ENCODE measurements at regions of chr12 and their contacts with region 1.

Region 1: DNA sequence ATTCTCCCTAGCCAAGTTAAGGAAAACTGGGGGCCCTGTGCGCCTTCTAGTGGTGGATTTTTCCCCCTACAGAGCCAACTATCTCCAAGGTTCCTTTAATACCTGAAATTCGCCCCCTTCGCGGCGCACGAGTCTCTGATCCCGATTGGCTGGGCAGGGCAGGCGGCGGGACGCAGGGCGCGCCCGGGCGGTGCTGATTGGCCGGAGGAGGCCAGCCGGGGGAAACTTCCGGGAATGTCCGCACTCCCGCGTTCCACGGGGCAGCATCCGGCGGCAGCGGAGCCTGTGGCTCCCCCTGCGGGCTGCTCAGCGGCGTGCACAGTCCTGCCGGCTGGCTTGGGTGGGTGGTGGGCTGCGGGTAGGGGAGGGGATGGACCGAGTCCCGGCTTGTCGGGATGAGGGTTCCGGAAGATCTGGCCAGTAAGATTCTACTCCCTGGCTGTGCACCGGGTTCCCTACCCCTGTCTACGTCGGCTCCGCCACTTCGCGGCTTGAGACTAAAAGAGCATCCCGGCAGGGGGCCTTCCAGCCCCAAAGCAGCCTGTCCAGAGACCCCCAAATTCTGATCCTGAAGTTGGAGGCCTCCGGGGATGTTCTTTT is at the start of gene NABP2:
- DNase-seq: peak; percentile 97
- H3K4me3 Mint-ChIP-seq: peak within 1 kb of the TSS; percentile 96
- H3K27ac Mint-ChIP-seq: peak within 1 kb of the TSS; percentile 80
- H3K4me1 Mint-ChIP-seq: peaks cover 33% of the 10 kb centered on the region
- H3K27me3 Mint-ChIP-seq: no peaks in the 10 kb centered on the region
- total RNA-seq, gene NABP2: 62.0 to 62.2 TPM

Region 2: DNA sequence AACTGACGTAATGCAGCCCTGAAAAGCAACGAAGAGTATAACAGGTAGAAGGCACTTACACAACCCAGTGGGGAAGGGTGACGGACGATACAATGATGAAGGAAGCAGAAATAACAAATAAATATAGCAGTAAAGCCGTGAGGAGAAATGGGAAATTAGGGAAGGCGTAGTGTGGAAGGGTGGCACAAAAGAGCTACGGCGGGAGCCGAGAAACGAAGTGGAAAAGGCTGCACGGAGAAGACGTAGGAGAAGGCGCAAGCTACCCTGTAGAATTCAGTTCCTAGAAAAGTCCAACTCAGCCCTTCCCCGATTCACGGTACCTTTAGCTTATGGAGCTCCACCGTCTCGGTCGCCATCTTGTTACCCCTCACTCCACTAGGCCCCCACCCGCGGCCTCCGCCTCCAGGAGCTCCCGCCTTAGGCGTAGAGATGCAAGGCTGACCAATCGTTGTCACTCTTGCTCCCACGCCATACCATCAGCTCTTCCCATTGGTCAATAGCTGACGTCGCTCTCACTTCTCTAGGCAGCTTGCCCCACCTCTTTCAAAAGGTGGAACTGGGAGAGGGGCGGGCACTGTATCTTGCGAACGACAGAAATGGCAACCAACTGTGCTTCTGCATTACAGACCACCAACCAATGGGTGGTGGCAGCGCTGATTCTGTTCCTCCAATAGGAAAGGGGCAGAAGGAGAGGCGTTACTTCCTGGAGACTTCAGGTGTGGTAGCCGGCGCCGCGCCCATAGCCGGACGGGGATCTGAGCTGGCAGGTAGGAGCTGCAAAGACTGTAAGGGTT is 406.7 kb before region 1 on chr12 and contains the starts of genes ORMDL2 and SARNP:
- CTCF ChIA-PET with region 1: no interaction called
- POLR2A ChIA-PET with region 1: no interaction called
- intact Hi-C with region 1: loop called (anchors 5 kb)
- DNase-seq: peak; percentile 99
- H3K4me3 Mint-ChIP-seq: no peak within 1 kb of the TSS
- H3K27ac Mint-ChIP-seq: no peak within 1 kb of the TSS
- H3K4me1 Mint-ChIP-seq: peaks cover 49% of the 10 kb centered on the region
- H3K27me3 Mint-ChIP-seq: no peaks in the 10 kb centered on the region
- total RNA-seq, gene ORMDL2: 37.9 to 41.2 TPM
- total RNA-seq, gene SARNP: 104 to 110 TPM

Region 3: DNA sequence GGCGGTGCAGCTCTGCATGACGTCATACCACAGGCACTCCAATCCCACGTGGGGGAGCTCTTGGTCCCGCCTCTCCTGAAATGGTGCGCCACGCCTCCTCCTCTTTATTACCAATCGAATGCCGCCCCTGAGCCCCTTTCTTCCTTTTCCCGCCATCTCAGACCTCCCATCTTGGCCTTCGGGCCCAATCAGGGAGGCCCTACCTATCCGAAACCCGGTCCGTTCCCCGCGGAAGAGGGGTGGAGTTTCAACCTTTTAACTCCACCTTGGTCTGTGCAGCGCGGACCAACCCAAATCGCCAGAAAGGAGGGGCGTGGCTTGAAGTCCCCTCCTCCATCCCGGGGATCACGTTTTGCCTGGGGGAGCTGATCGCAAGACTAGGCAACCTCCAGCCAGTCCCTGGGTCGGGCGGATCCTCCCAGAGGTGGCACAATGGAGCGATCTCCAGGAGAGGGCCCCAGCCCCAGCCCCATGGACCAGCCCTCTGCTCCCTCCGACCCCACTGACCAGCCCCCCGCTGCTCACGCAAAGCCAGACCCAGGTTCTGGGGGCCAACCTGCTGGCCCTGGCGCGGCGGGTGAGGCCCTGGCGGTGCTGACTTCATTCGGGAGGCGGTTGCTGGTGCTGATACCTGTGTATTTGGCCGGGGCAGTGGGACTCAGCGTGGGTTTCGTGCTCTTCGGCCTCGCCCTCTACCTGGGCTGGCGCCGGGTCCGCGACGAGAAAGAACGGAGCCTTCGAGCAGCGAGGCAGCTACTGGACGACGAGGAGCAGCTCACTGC is 96.1 kb before region 1 on chr12 and contains the start of gene ESYT1:
- CTCF ChIA-PET with region 1: interaction called, 6 read pairs
- POLR2A ChIA-PET with region 1: interaction called, 17 read pairs
- intact Hi-C with region 1: no loop called
- DNase-seq: peak; percentile 99
- H3K4me3 Mint-ChIP-seq: peak within 1 kb of the TSS; percentile 97
- H3K27ac Mint-ChIP-seq: peak within 1 kb of the TSS; percentile 93
- H3K4me1 Mint-ChIP-seq: peaks cover 60% of the 10 kb centered on the region
- H3K27me3 Mint-ChIP-seq: no peaks in the 10 kb centered on the region
- total RNA-seq, gene ESYT1: 142 to 146 TPM

Region 4: GRCh38 chr12:56197921-56198635 is 26.1 kb before region 1 on chr12:
- CTCF ChIA-PET with region 1: interaction called, 21 read pairs
- POLR2A ChIA-PET with region 1: interaction called, 7 read pairs
- intact Hi-C with region 1: loop called (anchors 1 kb)
- DNase-seq: no peak
- H3K4me3 Mint-ChIP-seq: no peak overlapping the region
- H3K27ac Mint-ChIP-seq: no peak overlapping the region
- H3K4me1 Mint-ChIP-seq: peaks cover 5% of the 10 kb centered on the region
- H3K27me3 Mint-ChIP-seq: no peaks in the 10 kb centered on the region

Region 5: GRCh38 chr12:56212361-56212760 is 11.8 kb before region 1 on chr12:
- CTCF ChIA-PET with region 1: interaction called, 33 read pairs
- POLR2A ChIA-PET with region 1: no interaction called
- intact Hi-C with region 1: loop called (anchors 1 kb)
- DNase-seq: peak; percentile 52
- H3K4me3 Mint-ChIP-seq: no peak overlapping the region
- H3K27ac Mint-ChIP-seq: no peak overlapping the region
- H3K4me1 Mint-ChIP-seq: peaks cover 14% of the 10 kb centered on the region
- H3K27me3 Mint-ChIP-seq: no peaks in the 10 kb centered on the region

Region 6: GRCh38 chr12:56359851-56360767 is 135.9 kb after region 1 on chr12 and contains the start of gene STAT2:
- CTCF ChIA-PET with region 1: no interaction called
- POLR2A ChIA-PET with region 1: no interaction called
- intact Hi-C with region 1: loop called (anchors 1 kb)
- DNase-seq: peak; percentile 100
- H3K4me3 Mint-ChIP-seq: peak within 1 kb of the TSS; percentile 89
- H3K27ac Mint-ChIP-seq: peak within 1 kb of the TSS; percentile 94
- H3K4me1 Mint-ChIP-seq: peaks cover 19% of the 10 kb centered on the region
- H3K27me3 Mint-ChIP-seq: no peaks in the 10 kb centered on the region
- total RNA-seq, gene STAT2: 125 to 139 TPM